H1 (cell line): ENCODE measurements at regions of chr17 and their contacts with region 1.

Region 1: DNA sequence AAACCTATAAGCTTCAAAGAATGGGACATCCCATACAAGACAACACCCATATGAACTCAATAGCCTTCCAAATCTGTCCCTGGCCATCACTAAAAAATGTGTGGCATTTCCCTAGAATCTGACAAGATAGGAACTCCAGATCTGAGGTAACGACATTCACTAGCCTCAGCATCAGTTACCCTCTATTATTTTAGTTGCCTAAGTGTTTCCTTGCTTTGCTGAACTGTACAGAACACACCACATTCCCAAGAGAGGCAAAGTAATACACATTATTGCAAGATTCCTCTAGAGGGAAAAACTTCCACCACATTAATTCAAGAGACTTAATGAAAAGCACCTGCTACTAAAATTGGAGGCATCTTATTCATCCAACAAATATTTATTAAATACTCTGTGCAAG is 5.0 kb downstream of the LSM12 start:
- DNase-seq: no peak
- H3K4me3 ChIP-seq: no peak overlapping the region
- H3K27ac ChIP-seq: no peak overlapping the region
- H3K4me1 ChIP-seq: peaks cover 0 to 2% (median 0%) of the 10 kb centered on the region in 4 experiments; a peak in 2 of 7 replicates
- H3K27me3 ChIP-seq: no peaks in the 10 kb centered on the region
- CTCF ChIP-seq: no peak
- EP300 ChIP-seq: no peak
- POLR2A ChIP-seq: no peak
- RAD21 ChIP-seq: no peak

Region 2: GRCh38 chr17:43974382-43975266 is 86.8 kb before region 1 on chr17:
- CTCF ChIA-PET with region 1: no interaction called
- POLR2A ChIA-PET with region 1: no interaction called
- DNase-seq: no peak
- H3K4me3 ChIP-seq: no peak overlapping the region
- H3K27ac ChIP-seq: no peak overlapping the region
- H3K4me1 ChIP-seq: no peaks in the 10 kb centered on the region
- H3K27me3 ChIP-seq: no peaks in the 10 kb centered on the region
- CTCF ChIP-seq: no peak
- EP300 ChIP-seq: no peak
- POLR2A ChIP-seq: no peak
- RAD21 ChIP-seq: no peak

Region 3: GRCh38 chr17:44044067-44044466 is 17.4 kb before region 1 on chr17:
- CTCF ChIA-PET with region 1: interaction called, 8 read pairs
- POLR2A ChIA-PET with region 1: interaction called, 31 read pairs
- DNase-seq: no peak
- H3K4me3 ChIP-seq: no peak overlapping the region
- H3K27ac ChIP-seq: no peak overlapping the region
- H3K4me1 ChIP-seq: no peaks in the 10 kb centered on the region
- H3K27me3 ChIP-seq: no peaks in the 10 kb centered on the region
- CTCF ChIP-seq: no peak
- EP300 ChIP-seq: no peak
- POLR2A ChIP-seq: no peak
- RAD21 ChIP-seq: no peak

Region 4: GRCh38 chr17:44086364-44087311 is 25.2 kb after region 1 on chr17:
- CTCF ChIA-PET with region 1: interaction called, 10 read pairs
- POLR2A ChIA-PET with region 1: interaction called, 14 read pairs
- DNase-seq: no peak
- H3K4me3 ChIP-seq: peak overlapping the region in 3 of 4 experiments; percentile 19 to 46 (median 24); a peak in 5 of 8 replicates
- H3K27ac ChIP-seq: peak overlapping the region; percentile 70
- H3K4me1 ChIP-seq: peaks cover 3 to 18% (median 12%) of the 10 kb centered on the region in 4 experiments
- H3K27me3 ChIP-seq: no peaks in the 10 kb centered on the region
- CTCF ChIP-seq: no peak
- EP300 ChIP-seq: no peak
- POLR2A ChIP-seq: no peak
- RAD21 ChIP-seq: no peak